Sigmoid colon (tissue), 7 donors: ENCODE measurements at regions of chr6 and their contacts with region 1.

Region 1: DNA sequence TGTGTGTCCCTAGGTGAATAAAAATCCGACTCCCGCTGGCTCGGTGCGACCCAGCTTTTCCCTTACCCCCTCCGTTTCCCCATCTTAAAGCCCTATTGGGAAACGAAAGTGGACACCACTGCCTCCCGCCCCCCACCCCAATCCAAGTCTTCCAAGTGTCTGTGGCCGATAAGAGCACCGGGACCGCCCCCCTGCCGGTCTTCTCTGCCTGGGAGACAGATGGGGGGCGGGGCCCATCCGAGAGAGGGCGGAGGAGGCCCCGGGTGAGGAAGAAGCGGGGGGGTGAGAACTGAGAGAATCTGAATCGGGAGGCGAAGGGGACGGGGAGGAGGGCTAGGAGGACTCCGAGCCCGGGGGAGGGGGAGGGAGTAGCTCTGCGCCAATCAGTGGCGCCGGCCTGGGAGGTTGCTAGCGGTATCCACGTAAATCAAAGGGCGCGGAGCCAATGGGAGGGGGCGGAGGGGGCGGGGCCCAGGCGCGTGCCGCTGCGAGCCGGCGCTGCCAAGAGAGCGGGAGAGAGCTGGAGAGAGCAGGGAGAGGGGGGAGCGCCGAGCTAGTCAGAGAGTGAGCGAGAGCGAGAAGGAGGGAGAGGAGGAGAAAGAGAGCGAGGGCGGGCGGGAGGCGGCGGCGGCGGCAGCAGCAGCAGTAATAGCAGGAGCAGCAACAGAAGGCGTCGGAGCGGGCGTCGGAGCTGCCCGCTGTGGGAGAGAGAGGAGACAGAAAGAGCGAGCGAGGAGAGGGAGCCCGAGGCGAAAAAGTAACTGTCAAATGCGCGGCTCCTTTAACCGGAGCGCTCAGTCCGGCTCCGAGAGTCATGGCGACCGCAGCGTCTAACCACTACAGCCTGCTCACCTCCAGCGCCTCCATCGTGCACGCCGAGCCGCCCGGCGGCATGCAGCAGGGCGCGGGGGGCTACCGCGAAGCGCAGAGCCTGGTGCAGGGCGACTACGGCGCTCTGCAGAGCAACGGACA is at the start of gene POU3F2:
- DNase-seq: peak; percentile 77
- H3K4me3 ChIP-seq: peak within 1 kb of the TSS; percentile 29 to 57 (median 50)
- H3K27ac ChIP-seq: peak within 1 kb of the TSS in 1 of 4 donors; percentile 4
- H3K4me1 ChIP-seq: peaks cover 0 to 55% (median 50%) of the 10 kb centered on the region in 4 donors
- H3K27me3 ChIP-seq: peaks cover 64 to 100% (median 76%) of the 10 kb centered on the region in 3 donors
- CTCF ChIP-seq: no peak
- EP300 ChIP-seq: no peak
- POLR2A ChIP-seq: no peak
- total RNA-seq, gene POU3F2: not detected

Region 2: GRCh38 chr6:98769544-98769943 is 64.8 kb before region 1 on chr6:
- intact Hi-C with region 1: no loop called
- DNase-seq: no peak
- H3K4me3 ChIP-seq: no peak overlapping the region
- H3K27ac ChIP-seq: no peak overlapping the region
- H3K4me1 ChIP-seq: no peaks in the 10 kb centered on the region
- H3K27me3 ChIP-seq: no peaks in the 10 kb centered on the region
- CTCF ChIP-seq: no peak
- EP300 ChIP-seq: no peak
- POLR2A ChIP-seq: no peak

Region 3: DNA sequence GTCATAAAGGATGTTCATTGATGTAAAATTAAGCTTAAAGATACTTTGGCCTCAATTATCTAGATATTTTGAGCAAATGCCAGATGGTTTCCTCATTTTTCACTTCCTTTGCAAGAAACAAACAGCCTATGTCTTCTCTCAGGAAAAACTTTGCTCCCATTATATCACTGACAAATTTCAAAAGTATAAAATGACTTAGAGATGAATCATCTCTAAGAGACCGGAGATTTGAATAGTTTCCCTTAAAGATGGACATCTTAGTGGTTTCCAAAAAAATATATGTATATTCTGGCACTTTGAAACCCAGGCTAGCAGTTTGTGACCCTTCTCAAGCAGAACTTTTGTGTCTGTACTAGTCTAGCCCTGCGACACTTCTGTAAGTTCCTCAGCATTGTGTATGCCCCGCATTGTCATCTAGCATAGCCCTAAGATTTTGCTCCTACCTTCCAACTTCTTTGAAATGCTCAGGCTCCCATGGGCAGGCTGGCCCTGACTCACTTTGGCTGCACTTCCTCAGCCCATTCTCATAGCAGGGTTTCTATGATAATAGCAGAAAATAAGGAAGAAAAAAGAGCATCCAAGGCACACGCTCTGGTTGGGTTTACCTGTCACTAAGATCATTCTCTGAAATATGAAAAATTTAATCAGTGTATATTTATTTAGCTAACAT is 25.7 kb before region 1 on chr6:
- intact Hi-C with region 1: no loop called
- DNase-seq: no peak
- H3K4me3 ChIP-seq: no peak overlapping the region
- H3K27ac ChIP-seq: no peak overlapping the region
- H3K4me1 ChIP-seq: no peaks in the 10 kb centered on the region
- H3K27me3 ChIP-seq: no peaks in the 10 kb centered on the region
- CTCF ChIP-seq: no peak
- EP300 ChIP-seq: no peak
- POLR2A ChIP-seq: no peak

Region 4: DNA sequence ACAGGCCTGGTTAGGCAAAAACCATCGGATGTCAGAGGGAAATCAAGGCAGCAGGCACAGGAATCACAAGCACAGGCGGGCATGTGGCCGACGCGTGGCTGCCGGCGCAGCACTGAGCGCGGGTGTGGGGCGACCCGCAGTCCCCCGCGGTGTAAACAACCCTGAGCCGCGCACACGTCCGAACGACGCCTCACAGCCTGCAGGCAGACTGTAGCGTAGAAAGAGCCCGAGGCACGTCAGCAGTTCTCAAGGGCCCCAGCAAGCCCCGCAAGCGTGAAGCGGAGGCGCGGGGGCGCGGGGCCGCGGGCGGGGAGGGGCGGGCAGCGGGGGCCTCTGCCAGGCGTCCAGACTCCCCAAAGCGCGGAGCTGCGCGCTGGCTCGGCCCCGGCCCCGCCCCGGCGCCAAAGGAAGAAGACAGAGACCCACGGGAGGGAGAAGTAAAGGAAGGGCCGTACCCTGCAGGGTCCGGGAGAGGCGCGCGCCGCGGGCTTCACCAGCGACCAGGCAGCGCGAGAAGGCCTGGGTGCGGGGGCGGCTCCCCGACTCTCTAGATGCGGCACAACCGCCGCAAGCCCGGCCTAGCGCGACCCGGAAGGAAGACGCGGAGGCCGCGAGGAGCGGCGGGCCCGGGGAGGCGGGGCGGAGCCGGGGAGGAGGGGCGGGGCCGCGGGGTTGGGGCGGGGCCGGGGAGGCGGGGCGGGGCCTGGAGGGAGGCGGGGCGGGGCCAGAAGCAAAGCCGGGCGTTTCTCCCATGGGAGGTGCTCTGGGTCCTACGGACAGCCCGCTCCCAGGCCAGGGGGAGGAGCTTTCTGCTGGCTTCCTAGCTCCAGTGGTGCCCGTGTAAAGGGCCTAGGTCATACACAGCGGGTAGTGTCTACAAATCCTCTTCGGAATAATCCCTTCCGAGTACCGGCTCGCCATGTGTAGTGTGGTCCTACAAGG is 113.3 kb after region 1 on chr6 and contains the start of gene FBXL4:
- intact Hi-C with region 1: loop called (anchors 10 kb)
- DNase-seq: peak; percentile 92
- H3K4me3 ChIP-seq: peak within 1 kb of the TSS; percentile 58 to 94 (median 76)
- H3K27ac ChIP-seq: peak within 1 kb of the TSS; percentile 85 to 91 (median 88)
- H3K4me1 ChIP-seq: peaks cover 0 to 29% (median 26%) of the 10 kb centered on the region in 4 donors
- H3K27me3 ChIP-seq: no peaks in the 10 kb centered on the region
- CTCF ChIP-seq: no peak
- EP300 ChIP-seq: no peak
- POLR2A ChIP-seq: peak; percentile 36 to 50
- total RNA-seq, gene FBXL4: 19.1 to 31.4 (median 23.9) TPM

Region 5: DNA sequence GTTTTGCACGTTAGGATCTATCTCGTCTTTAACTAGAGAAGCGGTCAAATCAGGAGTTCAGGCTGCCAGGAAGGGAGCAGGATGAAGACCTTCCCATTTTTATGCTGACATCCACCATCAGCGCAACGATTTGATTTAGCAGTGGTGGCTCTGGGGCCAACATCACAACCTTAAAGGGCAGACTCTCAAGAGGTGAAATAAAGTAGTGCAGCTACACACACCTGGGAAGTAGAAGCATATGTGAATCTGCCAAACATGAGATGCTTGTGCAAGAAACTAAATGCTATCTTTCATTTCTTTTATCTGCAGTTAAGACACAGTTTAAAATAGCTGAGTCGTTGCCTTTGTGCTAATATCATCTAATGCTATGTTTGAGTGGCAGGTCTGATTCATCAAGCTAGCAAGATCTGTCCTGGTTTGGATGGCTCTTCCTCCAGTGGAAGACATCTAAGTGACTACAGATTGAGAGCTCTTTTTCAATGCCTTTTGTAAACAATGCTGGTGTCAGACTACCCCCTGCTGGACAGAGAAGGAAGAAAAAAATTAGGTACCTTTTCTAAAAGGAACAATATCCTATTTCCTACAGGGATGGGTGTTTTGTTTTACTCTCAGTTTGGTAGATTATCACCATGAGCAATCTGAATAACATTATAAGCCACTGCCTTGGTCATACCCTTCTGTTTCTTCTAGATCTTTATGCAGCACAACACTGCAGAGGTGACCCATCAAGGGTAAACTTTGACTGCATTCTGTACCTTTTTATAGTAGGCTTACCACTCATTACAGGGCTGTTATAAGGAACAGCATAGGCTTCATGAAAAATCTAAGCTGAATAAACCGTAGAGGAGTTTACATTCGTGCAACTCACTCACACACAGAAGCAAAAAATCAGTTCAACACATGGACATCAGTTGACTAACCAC is 285.0 kb after region 1 on chr6:
- intact Hi-C with region 1: loop called (anchors 10 kb)
- DNase-seq: no peak
- H3K4me3 ChIP-seq: no peak overlapping the region
- H3K27ac ChIP-seq: no peak overlapping the region
- H3K4me1 ChIP-seq: no peaks in the 10 kb centered on the region
- H3K27me3 ChIP-seq: no peaks in the 10 kb centered on the region
- CTCF ChIP-seq: peak in 3 of 4 experiments; percentile 56 to 67 (median 62)
- EP300 ChIP-seq: no peak
- POLR2A ChIP-seq: no peak

Region 6: GRCh38 chr6:99588618-99589289 is 754.4 kb after region 1 on chr6:
- intact Hi-C with region 1: loop called (anchors 10 kb)
- DNase-seq: peak; percentile 78
- H3K4me3 ChIP-seq: peak overlapping the region; percentile 24 to 56 (median 44)
- H3K27ac ChIP-seq: no peak overlapping the region
- H3K4me1 ChIP-seq: peaks cover 0 to 30% (median 26%) of the 10 kb centered on the region in 4 donors
- H3K27me3 ChIP-seq: peaks cover 43 to 86% (median 50%) of the 10 kb centered on the region in 3 donors
- CTCF ChIP-seq: peak in 2 of 4 experiments; percentile 16 to 41
- EP300 ChIP-seq: no peak
- POLR2A ChIP-seq: no peak